Astrocyte of the cerebellum (primary cell): ENCODE measurements at regions of chr9 and their contacts with region 1.

Region 1: GRCh38 chr9:77534376-77535057 is 113.6 kb downstream of the GNA14 start:
- DNase-seq: no peak
- H3K4me3 ChIP-seq: no peak overlapping the region
- CTCF ChIP-seq: no peak

Region 2: DNA sequence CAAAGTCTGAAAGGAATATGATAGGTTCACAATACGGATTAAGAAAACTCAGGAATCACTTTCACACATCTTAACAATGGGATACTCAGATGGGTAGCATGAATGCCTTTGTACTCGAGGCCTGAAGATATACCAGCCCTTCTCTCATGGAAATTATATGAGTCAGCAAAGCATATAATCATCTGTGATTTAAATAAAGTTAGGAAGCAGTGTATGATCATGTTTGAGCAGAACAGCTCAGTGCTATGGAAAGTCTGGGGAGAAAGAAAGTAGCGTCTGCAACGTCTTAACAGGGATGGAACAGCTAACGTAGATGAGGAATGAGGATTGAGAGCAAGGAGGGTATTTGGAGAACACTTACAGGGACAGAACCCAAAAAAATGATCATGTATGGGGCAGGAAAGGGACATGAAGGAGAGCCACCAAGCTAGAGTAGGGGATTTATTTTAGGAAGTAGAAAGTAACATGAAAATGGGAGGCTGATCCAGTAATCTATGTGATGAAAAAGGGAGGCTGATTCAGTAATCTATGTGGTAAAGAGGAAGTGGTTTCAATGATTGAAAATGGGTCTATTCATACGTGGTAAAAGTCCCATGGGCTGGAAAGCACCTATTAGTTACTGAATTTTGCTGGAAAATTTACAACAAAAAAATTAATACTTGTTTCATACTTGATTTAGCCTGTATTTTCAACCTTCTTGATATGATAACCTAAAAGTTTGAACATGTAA is 27.7 kb after region 1 on chr9:
- in situ Hi-C with region 1: loop called (anchors 5 kb)
- DNase-seq: no peak
- H3K4me3 ChIP-seq: no peak overlapping the region
- CTCF ChIP-seq: no peak

Region 3: DNA sequence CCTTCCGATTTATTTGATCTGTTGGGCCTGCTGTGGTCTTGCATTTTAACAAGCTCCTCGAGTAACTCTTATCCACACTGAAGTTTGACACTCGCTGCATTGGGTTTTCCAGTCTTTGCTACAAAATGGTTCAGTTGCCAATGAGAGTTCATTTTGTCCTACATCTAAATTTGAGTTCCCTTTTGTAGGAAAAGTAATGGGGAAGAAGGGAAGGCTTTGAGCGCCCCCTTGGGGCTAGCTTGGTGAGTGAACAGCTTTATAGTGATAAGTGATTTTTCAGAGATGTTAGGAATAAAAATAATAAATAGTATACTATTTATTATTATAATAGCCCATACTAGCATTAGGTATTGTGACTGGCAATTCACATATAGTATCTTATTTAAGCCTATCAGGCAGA is 587.0 kb after region 1 on chr9:
- in situ Hi-C with region 1: loop called (anchors 10 kb)
- DNase-seq: peak; percentile 41
- H3K4me3 ChIP-seq: no peak overlapping the region
- CTCF ChIP-seq: peak; percentile 78